ENCODE measurements at regions of chr1 and their contacts with region 1.

Region 1: GRCh38 chr1:161324020-161324419 is 9.8 kb downstream of the SDHC start:
- DNase-seq: no peak
- ATAC-seq: no peak

Region 2: DNA sequence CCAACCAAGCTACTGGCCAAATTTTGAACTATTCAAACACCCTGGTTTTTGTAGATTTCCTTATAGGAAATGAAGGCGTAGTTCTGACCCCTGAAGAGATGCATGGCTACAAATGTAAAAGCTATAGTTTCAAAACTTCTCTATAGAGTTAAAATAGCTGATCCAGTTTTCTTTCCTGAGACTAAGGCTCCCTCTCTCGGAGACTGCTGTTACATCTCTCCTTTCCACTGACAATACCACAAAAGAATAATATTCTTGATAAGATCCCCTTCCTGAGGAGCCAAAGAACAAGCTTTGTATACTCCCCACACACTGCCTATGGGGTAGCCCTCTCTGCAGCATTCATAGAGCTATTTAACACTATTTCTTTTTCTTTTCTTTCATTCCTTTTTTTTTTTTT is 50.4 kb after region 1 on chr1:
- intact Hi-C with region 1: loop called in 1 of 2 experiments (anchors 10 kb)
- DNase-seq: no peak
- ATAC-seq: no peak

Region 3: DNA sequence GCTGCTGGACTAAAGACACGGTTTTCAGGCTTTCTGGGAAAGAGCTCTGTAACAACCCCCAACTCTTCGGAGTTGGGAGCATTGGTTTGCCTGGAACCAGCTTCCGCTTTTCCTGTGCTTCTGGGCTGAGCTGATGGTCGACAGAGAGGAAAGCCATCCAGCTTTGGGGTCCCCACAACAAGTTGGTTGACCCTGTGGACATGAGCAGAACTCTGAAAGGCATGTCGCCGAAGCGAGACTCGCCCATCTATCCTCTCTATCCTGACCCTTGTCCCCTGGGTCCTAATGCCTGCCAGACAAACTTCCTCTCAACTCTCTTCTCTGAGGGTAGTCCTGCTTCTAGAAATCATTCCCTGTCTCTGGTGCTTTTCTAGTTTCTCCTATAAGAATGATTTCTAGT is 149.3 kb after region 1 on chr1:
- intact Hi-C with region 1: no loop called
- DNase-seq: peak in 1 of 2 donors; percentile 15
- ATAC-seq: no peak